Dorsolateral prefrontal cortex (tissue), 120 donors: ENCODE measurements at regions of chr20 and their contacts with region 1.

Region 1: GRCh38 chr20:43537921-43538877 is 20.6 kb upstream of the SGK2 start:
- DNase-seq: peak; percentile 71 to 91 (median 78)
- H3K4me3 ChIP-seq: no peak overlapping the region
- H3K27ac ChIP-seq: peak overlapping the region in 2 of 59 donors; percentile 28 to 49
- H3K27me3 ChIP-seq: no peaks in the 10 kb centered on the region
- CTCF ChIP-seq: peak; percentile 67 to 98 (median 94)

Region 2: DNA sequence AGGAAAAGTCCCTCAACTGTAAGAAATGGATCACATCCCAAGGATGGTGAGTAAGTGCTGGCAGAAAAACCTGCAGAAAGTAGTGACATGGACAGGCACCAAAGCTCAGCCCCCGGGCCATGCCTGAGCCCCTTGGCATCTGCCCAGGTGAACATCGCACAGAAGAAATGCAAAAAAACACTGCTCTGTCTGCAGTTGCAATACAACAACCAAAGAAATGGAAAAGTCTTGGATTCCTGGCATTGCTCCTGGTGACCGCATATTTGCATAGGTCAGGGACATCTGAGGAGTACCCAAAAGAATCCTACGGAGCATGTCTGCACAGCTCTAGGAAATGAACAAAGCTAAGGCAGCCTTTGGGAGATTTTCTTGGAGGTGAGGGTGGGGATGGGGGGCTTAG is 285.4 kb before region 1 on chr20:
- intact Hi-C with region 1: no loop called
- DNase-seq: no peak
- H3K4me3 ChIP-seq: no peak overlapping the region
- H3K27ac ChIP-seq: no peak overlapping the region
- H3K27me3 ChIP-seq: peaks cover 0 to 8% (median 0%) of the 10 kb centered on the region in 45 donors
- CTCF ChIP-seq: no peak

Region 3: GRCh38 chr20:43337036-43337435 is 201.2 kb before region 1 on chr20:
- intact Hi-C with region 1: no loop called
- DNase-seq: no peak
- H3K4me3 ChIP-seq: no peak overlapping the region
- H3K27ac ChIP-seq: no peak overlapping the region
- H3K27me3 ChIP-seq: no peaks in the 10 kb centered on the region
- CTCF ChIP-seq: no peak

Region 4: DNA sequence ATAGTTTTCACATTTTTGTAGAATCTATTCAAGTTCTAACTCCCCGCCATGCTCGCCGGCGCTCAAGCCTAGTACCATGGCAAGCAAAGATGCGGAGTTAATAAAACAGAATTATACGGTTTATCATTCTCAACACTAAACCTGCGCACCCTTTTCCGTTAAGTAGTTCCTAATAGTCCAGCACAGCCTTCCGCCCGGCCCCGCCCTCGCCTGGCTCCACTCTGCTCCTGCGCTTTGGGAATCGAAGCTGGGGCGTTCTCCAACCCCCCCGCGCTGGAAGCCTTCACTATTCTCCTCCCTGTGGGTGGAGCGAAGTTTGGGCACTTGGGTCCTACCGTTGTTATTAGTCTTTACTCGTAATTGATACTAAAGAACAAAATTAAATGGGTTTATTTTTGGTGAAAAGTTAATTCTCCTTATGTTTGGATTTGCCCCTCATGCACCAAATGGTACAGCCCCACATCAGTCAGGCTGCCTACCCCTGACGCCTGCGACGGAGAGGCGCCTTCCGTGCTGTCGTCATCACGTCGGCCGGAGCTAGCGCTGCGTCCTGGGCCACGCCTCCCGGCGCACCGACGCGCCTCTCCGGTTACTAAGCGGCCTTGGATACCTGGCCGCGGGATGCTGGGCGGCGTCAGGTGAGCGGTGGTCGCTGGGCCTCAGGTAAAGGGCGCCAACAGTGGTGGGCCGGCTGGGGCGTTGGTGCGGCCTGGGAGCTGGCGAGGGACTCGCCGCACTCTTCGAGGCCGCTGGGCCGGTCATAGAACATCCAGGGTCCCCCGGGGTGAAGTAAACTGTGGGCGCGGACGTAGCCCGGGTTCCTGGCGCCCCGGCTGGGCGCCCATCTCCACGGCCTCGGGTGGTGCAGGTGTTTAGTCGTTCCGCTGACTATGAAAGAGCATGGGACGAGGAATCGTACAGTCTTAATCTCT is 52.5 kb after region 1 on chr20 and contains the start of gene IFT52:
- intact Hi-C with region 1: loop called in 1 of 2 experiments (anchors 2 kb)
- DNase-seq: peak; percentile 82 to 93 (median 92)
- H3K4me3 ChIP-seq: peak within 1 kb of the TSS; percentile 75 to 100 (median 93)
- H3K27ac ChIP-seq: peak within 1 kb of the TSS; percentile 46 to 97 (median 89)
- H3K27me3 ChIP-seq: no peaks in the 10 kb centered on the region
- CTCF ChIP-seq: peak in 25 of 56 donors; percentile 0 to 51 (median 23)
- total RNA-seq, gene IFT52: 16.3 to 36.7 (median 24.2) TPM

Region 5: DNA sequence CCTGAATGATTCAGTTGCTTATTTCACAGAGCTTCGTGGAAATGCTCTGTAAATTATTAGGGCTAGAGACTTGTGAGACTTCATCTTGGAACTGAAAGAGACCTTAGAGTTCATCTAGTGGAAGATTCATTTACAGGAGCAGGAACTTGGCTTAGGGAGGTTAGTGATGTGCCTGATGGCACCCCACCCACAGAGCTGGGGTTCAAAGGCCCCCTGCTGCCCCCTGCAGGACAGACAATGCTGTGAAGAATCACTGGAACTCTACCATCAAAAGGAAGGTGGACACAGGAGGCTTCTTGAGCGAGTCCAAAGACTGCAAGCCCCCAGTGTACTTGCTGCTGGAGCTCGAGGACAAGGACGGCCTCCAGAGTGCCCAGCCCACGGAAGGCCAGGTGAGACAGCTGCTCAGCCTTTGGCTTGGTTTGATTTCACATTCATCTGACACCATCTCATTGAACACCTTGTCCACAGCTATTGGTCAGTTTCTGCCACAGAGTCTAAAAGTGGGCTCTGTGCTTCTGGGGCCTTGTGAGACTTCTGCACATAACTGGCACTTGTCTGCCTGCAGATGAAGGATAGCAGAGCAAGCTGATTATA is 153.8 kb after region 1 on chr20:
- intact Hi-C with region 1: loop called in 1 of 2 experiments (anchors 5 kb)
- DNase-seq: peak in 4 of 10 donors; percentile 43 to 53 (median 48)
- H3K4me3 ChIP-seq: no peak overlapping the region
- H3K27ac ChIP-seq: no peak overlapping the region
- H3K27me3 ChIP-seq: no peaks in the 10 kb centered on the region
- CTCF ChIP-seq: peak in 54 of 56 donors; percentile 16 to 67 (median 49)

Region 6: GRCh38 chr20:44080646-44081267 is 542.6 kb after region 1 on chr20:
- intact Hi-C with region 1: loop called in 1 of 2 experiments (anchors 10 kb)
- DNase-seq: peak in 9 of 10 donors; percentile 61 to 87 (median 76)
- H3K4me3 ChIP-seq: peak overlapping the region in 5 of 59 donors; percentile 14 to 20 (median 17)
- H3K27ac ChIP-seq: no peak overlapping the region
- H3K27me3 ChIP-seq: no peaks in the 10 kb centered on the region
- CTCF ChIP-seq: peak; percentile 95 to 100 (median 99)